Activated CD4-positive, alpha-beta memory T cell treated with anti-CD3 and anti-CD28 coated beads for 36 hours (primary cell): ENCODE measurements at regions of chr10 and their contacts with region 1.

Region 1: DNA sequence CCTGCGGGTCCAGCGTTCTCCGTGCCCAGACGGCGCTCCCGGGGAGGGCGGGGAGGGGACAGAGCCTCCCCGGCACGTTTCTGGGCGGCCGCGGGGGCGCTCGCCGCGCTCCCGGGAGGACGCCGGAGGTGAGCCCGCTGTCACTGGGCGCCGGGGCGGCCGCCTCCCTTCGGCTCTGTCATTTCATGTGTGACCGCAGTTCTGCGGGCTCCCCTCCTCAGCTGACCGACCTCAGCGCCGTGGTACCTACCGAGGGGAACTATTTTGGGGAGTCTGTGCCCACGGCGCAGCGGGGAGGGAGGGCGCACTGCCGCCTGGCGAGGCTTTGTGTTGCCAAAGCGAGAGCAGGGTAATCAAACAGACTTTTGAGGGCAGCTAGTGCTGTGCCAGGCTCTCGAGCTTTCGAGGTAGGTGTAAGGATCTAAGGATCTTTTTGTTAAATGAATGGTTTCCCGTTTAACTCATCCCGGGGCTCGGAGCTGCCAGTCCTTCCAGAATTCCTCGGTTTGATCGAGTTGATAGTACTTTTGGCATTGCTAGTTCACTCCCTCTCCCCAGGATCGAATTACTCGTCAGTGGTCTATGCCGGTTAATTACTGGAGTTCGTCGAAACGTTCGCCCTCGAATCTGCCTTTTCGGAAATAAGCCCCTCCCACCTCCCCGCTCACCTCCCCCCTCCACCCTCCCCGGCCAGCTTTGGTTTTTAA is 1.9 kb downstream of the ARID5B start:
- DNase-seq: peak; percentile 84
- H3K4me3 Mint-ChIP-seq: peak overlapping the region; percentile 90
- H3K27ac Mint-ChIP-seq: peak overlapping the region; percentile 95
- H3K4me1 Mint-ChIP-seq: peaks cover 45% of the 10 kb centered on the region
- H3K27me3 Mint-ChIP-seq: no peaks in the 10 kb centered on the region

Region 2: DNA sequence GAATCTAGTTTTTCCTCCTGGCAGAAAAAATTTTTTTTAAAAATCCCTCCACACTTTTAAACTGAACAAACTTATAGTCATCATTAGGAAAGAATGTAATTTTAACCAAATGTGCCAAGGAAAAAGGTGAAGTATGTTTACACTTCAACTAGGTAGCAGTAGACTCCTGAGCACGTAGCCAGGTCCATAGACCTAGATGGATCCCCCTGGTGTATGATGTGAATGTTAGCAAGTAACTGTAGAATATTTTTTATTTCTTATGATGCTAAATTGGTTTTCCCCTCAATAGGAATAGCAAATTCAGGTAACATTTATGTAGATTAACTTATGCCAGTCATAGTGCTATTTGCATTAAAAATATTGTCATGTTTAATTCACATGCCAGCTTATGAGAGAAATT is 221.1 kb before region 1 on chr10:
- CTCF ChIA-PET with region 1: no interaction called
- POLR2A ChIA-PET with region 1: no interaction called
- intact Hi-C with region 1: no loop called
- DNase-seq: no peak
- H3K4me3 Mint-ChIP-seq: no peak overlapping the region
- H3K27ac Mint-ChIP-seq: no peak overlapping the region
- H3K4me1 Mint-ChIP-seq: no peaks in the 10 kb centered on the region
- H3K27me3 Mint-ChIP-seq: no peaks in the 10 kb centered on the region

Region 3: GRCh38 chr10:61847087-61847486 is 56.3 kb before region 1 on chr10:
- CTCF ChIA-PET with region 1: no interaction called
- POLR2A ChIA-PET with region 1: no interaction called
- intact Hi-C with region 1: no loop called
- DNase-seq: no peak
- H3K4me3 Mint-ChIP-seq: no peak overlapping the region
- H3K27ac Mint-ChIP-seq: no peak overlapping the region
- H3K4me1 Mint-ChIP-seq: peaks cover 13% of the 10 kb centered on the region
- H3K27me3 Mint-ChIP-seq: no peaks in the 10 kb centered on the region

Region 4: GRCh38 chr10:61961278-61961677 is 57.9 kb after region 1 on chr10:
- CTCF ChIA-PET with region 1: interaction called, 4 read pairs
- POLR2A ChIA-PET with region 1: interaction called, 5 read pairs
- intact Hi-C with region 1: loop called (anchors 2 kb)
- DNase-seq: peak; percentile 49
- H3K4me3 Mint-ChIP-seq: peak overlapping the region; percentile 24
- H3K27ac Mint-ChIP-seq: peak overlapping the region; percentile 76
- H3K4me1 Mint-ChIP-seq: peaks cover 87% of the 10 kb centered on the region
- H3K27me3 Mint-ChIP-seq: no peaks in the 10 kb centered on the region

Region 5: GRCh38 chr10:61987951-61988379 is 84.6 kb after region 1 on chr10:
- CTCF ChIA-PET with region 1: interaction called, 6 read pairs
- POLR2A ChIA-PET with region 1: interaction called, 24 read pairs
- intact Hi-C with region 1: loop called (anchors 1 kb)
- DNase-seq: peak; percentile 50
- H3K4me3 Mint-ChIP-seq: peak overlapping the region; percentile 59
- H3K27ac Mint-ChIP-seq: peak overlapping the region; percentile 95
- H3K4me1 Mint-ChIP-seq: peaks cover 91% of the 10 kb centered on the region
- H3K27me3 Mint-ChIP-seq: no peaks in the 10 kb centered on the region

Region 6: DNA sequence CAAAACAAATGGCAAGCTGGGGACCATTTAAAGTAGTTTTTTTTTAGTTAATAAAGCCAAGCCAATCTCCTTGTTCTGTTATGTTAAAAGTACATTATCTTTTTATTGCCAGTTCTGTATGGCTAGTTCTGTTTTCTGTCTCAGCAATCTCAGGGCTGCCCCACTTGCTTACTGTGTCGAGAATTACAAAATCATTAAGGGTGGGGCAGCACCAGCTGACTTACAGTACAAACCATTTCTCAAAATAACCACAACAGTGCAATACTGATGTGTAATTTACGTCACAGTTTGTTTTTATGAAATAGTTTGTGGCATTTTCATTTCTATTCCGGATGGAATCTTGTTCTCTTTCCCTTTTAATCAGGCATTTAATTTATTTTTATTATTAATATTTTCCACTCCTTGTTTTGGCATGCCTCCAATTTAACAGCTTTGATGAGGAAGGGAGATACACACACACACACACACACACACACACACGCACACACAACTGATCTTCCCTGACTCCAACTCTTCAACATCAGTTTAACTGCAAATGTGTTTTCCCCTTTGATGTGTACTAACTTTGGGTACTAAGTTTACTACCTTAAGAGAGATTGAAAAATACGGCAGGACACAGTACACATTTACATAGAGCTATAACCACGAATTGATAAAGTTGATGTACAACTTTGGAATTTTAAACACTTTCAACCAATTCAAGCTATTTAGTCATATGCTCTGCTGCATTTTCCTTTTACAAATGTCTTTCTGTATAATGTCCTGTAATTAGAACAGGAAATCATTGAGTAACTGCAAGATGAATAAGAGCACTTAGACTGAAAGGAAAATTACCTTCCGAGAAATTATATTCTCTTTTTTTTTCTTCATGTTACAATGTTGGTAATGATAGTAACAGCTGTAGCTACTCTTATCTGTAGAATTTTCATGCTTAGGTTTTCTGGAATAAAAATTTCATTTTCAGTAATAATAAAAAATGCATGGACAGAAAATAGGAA is 89.6 kb after region 1 on chr10:
- CTCF ChIA-PET with region 1: interaction called, 6 read pairs
- POLR2A ChIA-PET with region 1: interaction called, 24 read pairs
- intact Hi-C with region 1: loop called (anchors 1 kb)
- DNase-seq: peak; percentile 75
- H3K4me3 Mint-ChIP-seq: peak overlapping the region; percentile 57
- H3K27ac Mint-ChIP-seq: peak overlapping the region; percentile 99
- H3K4me1 Mint-ChIP-seq: peaks cover 85% of the 10 kb centered on the region
- H3K27me3 Mint-ChIP-seq: no peaks in the 10 kb centered on the region

Region 7: GRCh38 chr10:62199584-62199983 is 296.2 kb after region 1 on chr10:
- CTCF ChIA-PET with region 1: no interaction called
- POLR2A ChIA-PET with region 1: no interaction called
- intact Hi-C with region 1: no loop called
- DNase-seq: no peak
- H3K4me3 Mint-ChIP-seq: no peak overlapping the region
- H3K27ac Mint-ChIP-seq: peak overlapping the region; percentile 35
- H3K4me1 Mint-ChIP-seq: peaks cover 27% of the 10 kb centered on the region
- H3K27me3 Mint-ChIP-seq: no peaks in the 10 kb centered on the region